Posterior vena cava (tissue), 2 donors: ENCODE measurements at regions of chr6 and their contacts with region 1.

Region 1: GRCh38 chr6:57248311-57248895 is 26.3 kb upstream of the RAB23 start:
- DNase-seq: no peak

Region 2: DNA sequence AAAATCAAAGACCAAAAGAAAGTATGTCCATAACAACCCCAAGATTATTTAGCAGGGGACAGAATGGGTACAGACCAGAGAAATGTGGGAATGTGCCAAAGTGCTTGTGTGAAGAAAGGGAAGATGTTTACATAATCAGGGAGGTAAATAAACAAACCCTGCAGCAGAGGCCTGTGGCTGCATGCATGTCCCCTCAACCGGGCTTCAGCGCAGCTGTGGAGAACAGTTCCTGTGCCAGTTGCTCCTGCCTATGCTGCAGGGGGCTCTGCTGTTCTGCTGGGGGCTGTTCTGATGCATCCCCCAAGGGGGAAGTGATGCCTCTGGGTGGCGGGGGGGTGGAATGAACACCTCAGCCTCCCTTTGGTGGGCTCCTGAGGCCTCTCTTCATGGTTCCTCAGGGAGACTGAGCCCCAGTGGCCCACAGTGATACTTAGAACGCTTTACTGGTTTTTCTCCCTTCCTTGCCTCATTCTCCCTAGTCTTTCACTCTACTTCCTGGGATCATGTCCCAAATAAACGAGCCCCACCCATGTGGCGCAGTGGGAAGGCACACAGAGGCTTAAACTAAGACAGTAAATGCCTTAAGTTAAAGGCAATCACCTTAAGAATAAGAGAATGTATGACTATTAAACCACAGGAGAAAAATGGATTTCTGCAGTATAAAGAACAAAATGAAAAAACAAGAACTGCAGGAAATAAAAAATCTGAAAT is 49.3 kb before region 1 on chr6:
- intact Hi-C with region 1: loop called in 1 of 2 experiments (anchors 1 kb)
- DNase-seq: no peak